Gastrocnemius medialis (tissue), 4 donors: ENCODE measurements at regions of chr1 and their contacts with region 1.

Region 1: GRCh38 chr1:202348509-202349205 is at the start of gene PPP1R12B:
- DNase-seq: peak; percentile 99
- ATAC-seq: peak; percentile 91
- H3K4me3 ChIP-seq: peak within 1 kb of the TSS; percentile 85 to 94 (median 86)
- H3K27ac ChIP-seq: peak within 1 kb of the TSS; percentile 89 to 97 (median 97)
- H3K4me1 ChIP-seq: peaks cover 44 to 46% of the 10 kb centered on the region in 2 donors
- H3K27me3 ChIP-seq: no peaks in the 10 kb centered on the region
- CTCF ChIP-seq: no peak
- POLR2A ChIP-seq: peak; percentile 91 to 93
- total RNA-seq, gene PPP1R12B: 127 to 207 (median 139) TPM

Region 2: GRCh38 chr1:202416641-202417040 is 68.0 kb after region 1 on chr1:
- in situ Hi-C with region 1: no loop called
- intact Hi-C with region 1: loop called (anchors 2 kb)
- DNase-seq: no peak
- ATAC-seq: no peak
- H3K4me3 ChIP-seq: no peak overlapping the region
- H3K27ac ChIP-seq: peak overlapping the region; percentile 22 to 98 (median 66)
- H3K4me1 ChIP-seq: peaks cover 65 to 69% of the 10 kb centered on the region in 2 donors
- H3K27me3 ChIP-seq: no peaks in the 10 kb centered on the region
- CTCF ChIP-seq: no peak
- POLR2A ChIP-seq: no peak

Region 3: DNA sequence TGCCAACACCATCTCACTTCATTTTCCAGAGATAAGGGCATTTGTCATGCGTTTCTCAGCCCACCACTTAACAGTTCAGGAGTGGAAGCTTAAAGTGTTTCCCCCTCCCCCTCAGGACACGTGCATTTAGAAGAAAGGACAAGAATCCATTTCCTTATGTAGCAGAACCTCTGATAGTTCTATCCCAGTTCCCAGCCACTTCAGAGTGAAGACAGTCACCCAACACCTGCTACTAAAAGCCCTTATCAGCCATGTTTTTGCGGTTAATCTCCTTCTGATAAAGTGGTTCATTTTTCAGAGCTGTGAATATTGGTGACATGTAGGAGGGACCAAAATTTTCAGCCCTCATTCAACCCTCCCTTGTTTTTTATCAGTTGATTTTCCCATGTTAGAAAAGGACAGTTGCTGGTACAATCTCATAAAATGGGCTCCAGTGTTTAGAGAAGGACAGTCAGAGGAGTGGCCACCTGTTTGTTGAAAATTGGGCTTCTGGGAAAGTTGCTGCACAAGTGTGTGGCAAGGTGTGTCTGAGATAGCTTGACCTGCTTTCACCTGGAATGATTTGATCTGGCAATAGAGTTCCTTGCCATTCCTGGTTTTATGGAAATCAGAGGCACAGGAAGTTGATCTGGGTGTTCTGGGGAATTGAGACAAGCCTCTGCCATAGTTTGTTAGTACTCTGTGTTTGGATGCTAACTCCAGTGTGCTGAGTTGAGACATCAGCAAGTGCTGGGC is 113.9 kb after region 1 on chr1:
- in situ Hi-C with region 1: loop called in 1 of 4 experiments (anchors 25 kb)
- intact Hi-C with region 1: loop called (anchors 5 kb)
- DNase-seq: no peak
- ATAC-seq: no peak
- H3K4me3 ChIP-seq: no peak overlapping the region
- H3K27ac ChIP-seq: peak overlapping the region; percentile 77 to 81 (median 79)
- H3K4me1 ChIP-seq: peaks cover 69 to 83% of the 10 kb centered on the region in 2 donors
- H3K27me3 ChIP-seq: no peaks in the 10 kb centered on the region
- CTCF ChIP-seq: no peak
- POLR2A ChIP-seq: no peak

Region 4: GRCh38 chr1:202531472-202531811 is 182.8 kb after region 1 on chr1:
- in situ Hi-C with region 1: no loop called
- intact Hi-C with region 1: no loop called
- DNase-seq: no peak
- ATAC-seq: no peak
- H3K4me3 ChIP-seq: no peak overlapping the region
- H3K27ac ChIP-seq: peak overlapping the region in 2 of 4 donors; percentile 24 to 57
- H3K4me1 ChIP-seq: peaks cover 10 to 16% of the 10 kb centered on the region in 2 donors
- H3K27me3 ChIP-seq: no peaks in the 10 kb centered on the region
- CTCF ChIP-seq: no peak
- POLR2A ChIP-seq: no peak

Region 5: DNA sequence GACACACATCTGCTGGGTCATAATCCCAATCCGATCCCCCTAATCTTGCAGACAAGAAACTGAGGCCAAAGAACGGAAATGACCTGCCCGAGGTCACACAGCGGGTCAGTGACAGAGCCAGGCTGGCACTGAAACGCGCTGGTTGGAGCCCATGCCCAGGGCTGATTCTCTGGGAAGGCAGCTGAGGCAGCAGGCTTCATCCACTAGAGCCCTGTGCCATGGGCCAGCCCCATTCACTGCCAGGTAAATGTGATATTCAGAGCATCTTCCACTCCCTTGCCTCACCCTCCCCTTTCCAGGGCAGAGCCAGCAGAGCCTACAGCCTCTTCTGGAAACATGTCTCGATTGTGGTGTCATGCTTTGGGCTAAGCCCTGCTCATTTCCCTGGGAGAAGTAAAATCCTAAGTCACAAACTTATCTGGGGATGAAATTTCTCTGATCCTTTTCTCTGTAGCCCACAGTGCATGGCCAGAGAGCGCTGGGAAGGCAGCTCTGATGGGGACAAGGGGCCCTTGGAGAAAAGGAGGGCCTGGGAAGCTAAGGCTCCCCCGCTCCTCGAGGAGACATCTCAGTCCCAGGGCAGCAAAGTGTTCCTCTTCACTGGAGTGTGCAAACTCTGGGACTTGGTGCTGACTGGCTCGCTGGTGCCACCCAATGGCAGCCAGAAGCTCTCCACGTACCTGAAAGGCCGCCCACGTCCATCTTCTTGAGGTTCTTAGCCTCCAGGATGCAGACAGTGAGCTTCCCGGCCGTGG is 251.2 kb after region 1 on chr1:
- in situ Hi-C with region 1: loop called in 3 of 4 experiments (anchors 25 kb)
- intact Hi-C with region 1: loop called (anchors 10 kb)
- DNase-seq: peak; percentile 37 to 42
- ATAC-seq: peak; percentile 57 to 71
- H3K4me3 ChIP-seq: no peak overlapping the region
- H3K27ac ChIP-seq: no peak overlapping the region
- H3K4me1 ChIP-seq: peaks cover 0 to 3% of the 10 kb centered on the region in 2 donors
- H3K27me3 ChIP-seq: no peaks in the 10 kb centered on the region
- CTCF ChIP-seq: peak in 4 of 5 experiments; percentile 32 to 71 (median 59)
- POLR2A ChIP-seq: no peak

Region 6: GRCh38 chr1:202615501-202616354 is 267.1 kb after region 1 on chr1:
- in situ Hi-C with region 1: loop called in 1 of 4 experiments (anchors 25 kb)
- intact Hi-C with region 1: loop called (anchors 5 kb)
- DNase-seq: peak in 1 of 2 donors; percentile 55
- ATAC-seq: peak; percentile 60 to 70
- H3K4me3 ChIP-seq: no peak overlapping the region
- H3K27ac ChIP-seq: peak overlapping the region; percentile 26 to 61 (median 50)
- H3K4me1 ChIP-seq: peaks cover 31 to 48% of the 10 kb centered on the region in 2 donors
- H3K27me3 ChIP-seq: no peaks in the 10 kb centered on the region
- CTCF ChIP-seq: no peak
- POLR2A ChIP-seq: no peak